ENCODE measurements at regions of chr1 and their contacts with region 1.

Region 1: DNA sequence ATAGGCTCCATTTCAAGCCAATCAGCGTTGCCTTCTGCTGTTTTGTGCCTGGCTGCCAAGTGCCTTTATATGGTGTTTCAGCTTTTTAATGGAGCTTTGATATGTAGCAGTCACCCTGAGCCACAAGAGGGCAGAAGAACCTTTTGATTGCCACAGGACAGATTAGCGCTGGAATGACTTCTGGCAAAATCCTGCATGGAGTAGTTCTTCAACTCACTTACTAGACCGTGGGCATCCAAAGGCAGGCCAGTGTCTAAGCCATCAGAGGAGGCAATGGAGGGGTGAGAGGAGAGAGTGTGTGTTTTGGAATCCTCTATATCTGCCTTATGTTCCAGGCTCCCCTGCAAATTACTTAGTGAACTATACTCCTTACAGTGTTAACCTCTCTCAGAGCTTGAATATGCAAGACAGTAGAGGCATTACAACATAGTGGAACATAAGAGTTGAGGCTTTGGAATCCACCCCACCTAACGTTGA is 56.2 kb downstream of the ST3GAL3 start:
- DNase-seq: peak in 4 of 6 donors; percentile 37 to 78 (median 56)
- ATAC-seq: peak; percentile 95 to 100 (median 98)
- H3K4me3 ChIP-seq: no peak overlapping the region
- H3K27ac ChIP-seq: no peak overlapping the region
- H3K4me1 ChIP-seq: no peaks in the 10 kb centered on the region
- H3K27me3 ChIP-seq: no peaks in the 10 kb centered on the region
- CTCF ChIP-seq: peak; percentile 58 to 74 (median 62)

Region 2: GRCh38 chr1:43822040-43822439 is 58.5 kb after region 1 on chr1:
- intact Hi-C with region 1: no loop called
- DNase-seq: no peak
- ATAC-seq: peak in 2 of 4 donors; percentile 46 to 49
- H3K4me3 ChIP-seq: no peak overlapping the region
- H3K27ac ChIP-seq: no peak overlapping the region
- H3K4me1 ChIP-seq: no peaks in the 10 kb centered on the region
- H3K27me3 ChIP-seq: no peaks in the 10 kb centered on the region
- CTCF ChIP-seq: no peak

Region 3: GRCh38 chr1:43934101-43934985 is 170.8 kb after region 1 on chr1:
- intact Hi-C with region 1: loop called in 2 of 3 experiments (anchors 10 kb)
- DNase-seq: peak; percentile 68 to 91 (median 80)
- ATAC-seq: peak; percentile 70 to 76 (median 74)
- H3K4me3 ChIP-seq: peak overlapping the region in 2 of 4 donors; percentile 40 to 51
- H3K27ac ChIP-seq: peak overlapping the region in 1 of 4 donors; percentile 9
- H3K4me1 ChIP-seq: peaks cover 6 to 9% (median 8%) of the 10 kb centered on the region in 3 donors
- H3K27me3 ChIP-seq: no peaks in the 10 kb centered on the region
- CTCF ChIP-seq: peak; percentile 34 to 74 (median 70)

Region 4: GRCh38 chr1:43952731-43953346 is 189.3 kb after region 1 on chr1:
- intact Hi-C with region 1: no loop called
- DNase-seq: peak in 1 of 6 donors; percentile 32
- ATAC-seq: peak in 2 of 4 donors; percentile 55 to 62
- H3K4me3 ChIP-seq: no peak overlapping the region
- H3K27ac ChIP-seq: no peak overlapping the region
- H3K4me1 ChIP-seq: peaks cover 3 to 8% (median 4%) of the 10 kb centered on the region in 3 donors
- H3K27me3 ChIP-seq: no peaks in the 10 kb centered on the region
- CTCF ChIP-seq: no peak

Region 5: GRCh38 chr1:44029906-44030604 is 266.5 kb after region 1 on chr1:
- intact Hi-C with region 1: loop called in 1 of 3 experiments (anchors 10 kb)
- DNase-seq: peak; percentile 87 to 96 (median 92)
- ATAC-seq: peak; percentile 87 to 91 (median 88)
- H3K4me3 ChIP-seq: peak overlapping the region; percentile 67 to 94 (median 73)
- H3K27ac ChIP-seq: peak overlapping the region; percentile 63 to 89 (median 72)
- H3K4me1 ChIP-seq: peaks cover 0 to 11% (median 0%) of the 10 kb centered on the region in 3 donors
- H3K27me3 ChIP-seq: no peaks in the 10 kb centered on the region
- CTCF ChIP-seq: no peak